Heart right ventricle (tissue), 16 donors: ENCODE measurements at regions of chr4 and their contacts with region 1.

Region 1: DNA sequence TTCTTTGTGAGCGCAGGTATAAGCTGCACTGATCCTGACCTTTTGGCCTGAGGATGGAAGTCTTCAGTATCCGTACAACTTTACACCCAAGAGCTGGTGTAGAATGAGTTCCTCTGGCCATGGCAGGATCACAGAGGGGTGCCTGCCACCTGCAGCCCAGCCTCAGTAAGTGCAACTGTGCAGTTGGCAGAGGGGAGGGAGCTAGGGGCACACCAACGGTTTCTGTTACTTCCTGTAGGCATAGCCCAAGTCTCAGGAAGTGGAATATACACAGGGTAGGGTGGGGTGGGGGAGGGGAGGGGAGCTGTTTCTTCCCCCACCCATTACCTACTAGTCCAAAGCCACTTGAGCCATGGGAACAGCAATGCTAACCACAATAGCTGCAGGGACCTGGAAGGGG is 85.4 kb upstream of the GBA3 start:
- DNase-seq: peak in 1 of 2 donors; percentile 27
- ATAC-seq: peak; percentile 81 to 99 (median 86)
- H3K4me3 ChIP-seq: no peak overlapping the region
- H3K27ac ChIP-seq: no peak overlapping the region
- H3K4me1 ChIP-seq: no peaks in the 10 kb centered on the region
- H3K27me3 ChIP-seq: no peaks in the 10 kb centered on the region
- CTCF ChIP-seq: peak; percentile 33 to 66 (median 52)

Region 2: DNA sequence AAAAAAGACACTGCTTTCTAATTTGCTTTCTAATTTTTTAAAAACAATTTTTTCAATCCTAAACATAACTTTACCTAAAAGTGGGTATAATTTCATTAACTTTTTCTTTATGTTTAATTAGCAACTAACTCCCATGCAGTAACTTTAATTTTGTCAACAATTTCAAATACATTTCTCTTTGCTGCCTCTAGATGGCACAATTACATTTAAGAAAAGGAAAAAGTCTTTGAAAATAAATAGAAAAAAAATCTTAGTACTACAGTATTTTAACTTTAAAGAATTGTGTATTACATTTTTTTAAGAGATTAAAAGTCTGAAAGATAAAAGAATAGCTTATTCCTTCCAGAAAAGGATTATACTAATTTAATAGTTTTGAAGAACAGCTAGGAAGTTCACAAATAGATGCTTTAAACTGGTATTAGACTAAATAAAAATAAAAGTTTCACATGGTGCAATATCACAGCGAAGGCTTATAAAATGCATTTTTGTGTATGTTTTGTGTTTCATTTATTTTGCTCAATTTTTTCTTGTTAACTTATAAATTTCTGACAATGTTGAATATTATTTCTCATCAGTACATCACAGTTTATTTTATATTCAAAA is 196.6 kb before region 1 on chr4:
- intact Hi-C with region 1: loop called in 9 of 10 experiments (anchors 2 to 10 kb)
- DNase-seq: no peak
- ATAC-seq: no peak
- H3K4me3 ChIP-seq: no peak overlapping the region
- H3K27ac ChIP-seq: no peak overlapping the region
- H3K4me1 ChIP-seq: peaks cover 0 to 6% (median 0%) of the 10 kb centered on the region in 9 donors
- H3K27me3 ChIP-seq: no peaks in the 10 kb centered on the region
- CTCF ChIP-seq: peak; percentile 20 to 69 (median 59)

Region 3: DNA sequence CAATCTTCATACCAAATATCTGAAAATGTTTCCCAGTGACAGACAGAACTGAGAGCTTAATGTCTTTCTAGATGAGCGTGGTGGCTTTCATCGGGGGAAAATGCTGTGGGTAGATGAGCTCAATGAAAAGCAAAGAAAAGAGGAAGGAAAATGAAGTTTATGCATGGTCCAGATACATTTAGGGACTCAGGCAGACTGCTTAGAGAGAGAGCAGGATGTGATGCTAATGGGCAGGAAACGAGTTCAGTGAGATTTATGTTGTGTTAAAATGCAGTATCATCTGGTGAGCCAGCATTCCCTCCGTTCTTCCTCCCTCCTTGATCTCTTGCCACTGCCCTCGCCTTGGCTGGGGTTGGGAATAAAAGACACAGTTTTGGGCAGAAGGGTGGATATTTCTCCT is 314.6 kb after region 1 on chr4:
- intact Hi-C with region 1: no loop called
- DNase-seq: no peak
- ATAC-seq: no peak
- H3K4me3 ChIP-seq: no peak overlapping the region
- H3K27ac ChIP-seq: no peak overlapping the region
- H3K4me1 ChIP-seq: no peaks in the 10 kb centered on the region
- H3K27me3 ChIP-seq: peaks cover 0 to 4% (median 0%) of the 10 kb centered on the region in 7 donors
- CTCF ChIP-seq: no peak